ENCODE measurements at regions of chr5 and their contacts with region 1.

Region 1: DNA sequence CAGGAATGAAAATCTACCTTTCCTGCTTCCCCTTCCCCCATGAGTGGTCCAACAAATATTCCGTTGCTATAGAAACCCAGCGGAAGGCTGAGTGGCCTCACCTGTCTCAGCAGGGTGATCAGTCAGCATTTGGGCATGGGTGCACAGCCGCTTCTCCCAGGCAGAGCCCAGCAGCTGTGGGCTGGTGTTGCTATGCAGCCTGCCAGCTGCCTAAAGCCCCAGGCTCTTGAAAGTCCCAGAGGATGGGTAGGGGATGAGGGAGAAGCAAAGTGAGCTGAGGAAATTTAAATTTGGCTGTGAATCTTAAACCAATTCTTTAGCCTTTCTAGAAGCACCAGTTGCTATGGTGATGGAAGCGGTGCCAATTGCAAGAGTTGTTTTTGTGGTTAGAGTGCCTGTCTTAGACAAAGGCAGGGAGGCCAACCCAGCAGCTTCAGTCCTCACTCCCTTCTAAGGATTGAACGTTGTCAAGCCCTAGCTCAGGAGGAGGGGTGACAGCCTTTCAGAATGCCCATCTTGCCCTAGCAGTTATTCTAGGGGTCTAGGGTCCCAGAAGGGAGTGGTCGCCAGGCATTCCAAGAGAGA is 151.5 kb upstream of the PITX1 start:
- DNase-seq: no peak
- H3K4me3 ChIP-seq: no peak overlapping the region
- H3K27ac ChIP-seq: no peak overlapping the region
- H3K4me1 ChIP-seq: peaks cover 0 to under 1% (median 0%) of the 10 kb centered on the region in 4 donors
- H3K27me3 ChIP-seq: no peaks in the 10 kb centered on the region
- CTCF ChIP-seq: no peak

Region 2: GRCh38 chr5:134738133-134738962 is 447.2 kb before region 1 on chr5 and contains the start of gene CAMLG:
- intact Hi-C with region 1: no loop called
- DNase-seq: peak; percentile 98 to 99
- H3K4me3 ChIP-seq: peak within 1 kb of the TSS; percentile 58 to 69
- H3K27ac ChIP-seq: peak within 1 kb of the TSS; percentile 90 to 94
- H3K4me1 ChIP-seq: peaks cover 0 to 25% (median 18%) of the 10 kb centered on the region in 4 donors
- H3K27me3 ChIP-seq: no peaks in the 10 kb centered on the region
- CTCF ChIP-seq: peak; percentile 39 to 49

Region 3: GRCh38 chr5:134920848-134921575 is 264.6 kb before region 1 on chr5:
- intact Hi-C with region 1: loop called (anchors 10 kb)
- DNase-seq: no peak
- H3K4me3 ChIP-seq: no peak overlapping the region
- H3K27ac ChIP-seq: no peak overlapping the region
- H3K4me1 ChIP-seq: no peaks in the 10 kb centered on the region
- H3K27me3 ChIP-seq: no peaks in the 10 kb centered on the region
- CTCF ChIP-seq: no peak

Measured in tibial artery (tissue), 4 donors.